Panc1 (cell line): ENCODE measurements at regions of chr19 and their contacts with region 1.

Region 1: DNA sequence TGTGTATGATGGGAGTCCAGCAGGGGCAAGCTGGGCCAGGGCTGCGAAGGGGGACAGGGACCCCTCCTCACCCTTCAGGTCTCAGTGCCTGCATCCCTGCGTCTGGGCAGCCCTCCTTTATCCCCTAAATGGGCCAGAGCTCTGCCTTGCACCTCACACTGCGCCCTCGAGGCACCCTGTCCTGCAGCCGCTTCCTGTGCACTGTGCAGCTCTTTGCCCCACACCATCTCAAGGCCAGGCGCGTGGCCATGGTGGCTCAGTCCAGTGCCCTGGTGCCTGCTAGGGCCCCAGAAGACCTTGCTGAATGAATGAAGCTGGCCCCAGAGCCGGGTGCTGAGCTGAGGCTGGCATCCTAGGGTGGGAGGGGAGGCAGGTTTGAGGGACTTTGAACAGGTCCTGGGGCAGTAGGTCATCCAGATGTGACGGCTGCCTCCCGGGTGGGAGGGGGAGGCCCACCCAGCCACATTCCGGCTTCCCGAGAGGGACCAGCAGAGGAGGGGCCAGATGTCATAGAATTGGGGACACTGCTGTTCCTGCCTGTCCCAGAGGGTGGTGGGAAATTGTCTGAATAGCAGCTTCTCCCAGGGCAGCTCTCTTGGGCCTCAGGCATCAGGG is 3.2 kb downstream of the DDA1 start:
- DNase-seq: no peak
- ATAC-seq: no peak
- H3K4me3 ChIP-seq: no peak overlapping the region
- H3K27ac ChIP-seq: peak overlapping the region; percentile 63
- H3K4me1 ChIP-seq: peaks cover 23% of the 10 kb centered on the region
- H3K27me3 ChIP-seq: no peaks in the 10 kb centered on the region
- CTCF ChIP-seq: no peak

Region 2: GRCh38 chr19:17339096-17339741 is 26.6 kb after region 1 on chr19:
- CTCF ChIA-PET with region 1: interaction called, 11 read pairs
- POLR2A ChIA-PET with region 1: no interaction called
- in situ Hi-C with region 1: no loop called
- intact Hi-C with region 1: no loop called
- DNase-seq: no peak
- ATAC-seq: no peak
- H3K4me3 ChIP-seq: no peak overlapping the region
- H3K27ac ChIP-seq: no peak overlapping the region
- H3K4me1 ChIP-seq: peaks cover 10% of the 10 kb centered on the region
- H3K27me3 ChIP-seq: no peaks in the 10 kb centered on the region
- CTCF ChIP-seq: no peak